ENCODE measurements at regions of chr17 and their contacts with region 1.

Region 1: GRCh38 chr17:1186923-1187771 is 7.4 kb upstream of the ABR start:
- DNase-seq: peak; percentile 92 to 95
- ATAC-seq: peak; percentile 90 to 98
- H3K4me3 ChIP-seq: no peak overlapping the region
- H3K27ac ChIP-seq: peak overlapping the region in 1 of 2 experiments; percentile 61; a peak in 3 of 6 replicates
- H3K4me1 ChIP-seq: peaks cover 4% of the 10 kb centered on the region; the same call in 1 of the 3 replicates
- CTCF ChIP-seq: peak; percentile 97
- EP300 ChIP-seq: no peak
- POLR2A ChIP-seq: no peak
- RAD21 ChIP-seq: peak; percentile 79 to 85

Region 2: GRCh38 chr17:1108861-1109605 is 78.1 kb before region 1 on chr17:
- CTCF ChIA-PET with region 1: interaction called, 33 read pairs
- POLR2A ChIA-PET with region 1: no interaction called
- DNase-seq: peak; percentile 48 to 66
- ATAC-seq: peak; percentile 39 to 40
- H3K4me3 ChIP-seq: peak overlapping the region; percentile 80
- H3K27ac ChIP-seq: peak overlapping the region; percentile 98 to 99
- H3K4me1 ChIP-seq: peaks cover 45% of the 10 kb centered on the region
- CTCF ChIP-seq: no peak
- EP300 ChIP-seq: no peak
- POLR2A ChIP-seq: peak; percentile 45
- RAD21 ChIP-seq: no peak

Region 3: DNA sequence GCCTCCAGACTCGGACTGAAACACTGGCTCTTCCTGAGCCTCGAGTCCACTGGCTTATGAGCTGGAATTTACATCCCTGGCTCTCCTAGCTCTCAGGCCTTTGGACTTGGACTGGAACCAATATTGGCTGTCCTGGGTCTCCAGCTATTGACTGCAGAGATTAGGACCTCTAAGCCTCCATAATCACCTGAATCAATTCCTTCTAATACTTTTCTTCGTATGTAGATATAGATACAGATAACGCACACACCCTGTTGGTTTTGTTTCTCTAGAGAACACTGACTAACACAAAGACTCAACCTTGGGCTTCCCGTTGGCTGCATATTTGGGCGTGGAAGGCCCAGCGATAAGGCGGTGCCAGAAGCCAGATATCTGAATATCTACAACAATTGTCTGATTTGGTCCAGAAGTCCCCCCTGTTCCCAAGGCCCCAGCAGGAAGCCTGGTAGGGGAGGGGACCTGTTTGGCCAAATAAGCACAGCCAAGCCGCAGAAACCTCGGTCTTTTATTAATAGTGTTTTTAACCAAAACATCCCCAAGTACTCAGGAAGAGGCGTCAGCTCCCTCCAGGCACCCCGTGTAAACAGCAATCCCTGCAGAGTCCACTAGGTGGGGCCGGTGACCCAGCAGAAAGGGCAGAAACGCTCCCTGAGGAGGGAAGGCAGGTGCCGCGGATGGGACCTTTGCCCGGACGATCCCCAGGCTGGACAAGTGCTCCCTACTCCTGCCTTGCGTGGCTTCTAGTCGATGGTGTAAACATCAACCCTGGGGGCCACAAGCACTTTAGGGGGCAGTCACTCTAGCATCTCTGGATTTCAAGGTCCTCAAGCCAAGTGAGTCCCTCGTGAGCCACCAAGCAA is 64.4 kb before region 1 on chr17:
- CTCF ChIA-PET with region 1: interaction called, 324 read pairs
- POLR2A ChIA-PET with region 1: interaction called, 3 read pairs
- DNase-seq: peak; percentile 71 to 91
- ATAC-seq: peak; percentile 72 to 94
- H3K4me3 ChIP-seq: no peak overlapping the region
- H3K27ac ChIP-seq: peak overlapping the region; percentile 31 to 44; a peak in 5 of 6 replicates
- H3K4me1 ChIP-seq: peaks cover 14% of the 10 kb centered on the region; the same call in 2 of the 3 replicates
- CTCF ChIP-seq: peak; percentile 92
- EP300 ChIP-seq: no peak
- POLR2A ChIP-seq: no peak
- RAD21 ChIP-seq: peak; percentile 92 to 93

Region 4: DNA sequence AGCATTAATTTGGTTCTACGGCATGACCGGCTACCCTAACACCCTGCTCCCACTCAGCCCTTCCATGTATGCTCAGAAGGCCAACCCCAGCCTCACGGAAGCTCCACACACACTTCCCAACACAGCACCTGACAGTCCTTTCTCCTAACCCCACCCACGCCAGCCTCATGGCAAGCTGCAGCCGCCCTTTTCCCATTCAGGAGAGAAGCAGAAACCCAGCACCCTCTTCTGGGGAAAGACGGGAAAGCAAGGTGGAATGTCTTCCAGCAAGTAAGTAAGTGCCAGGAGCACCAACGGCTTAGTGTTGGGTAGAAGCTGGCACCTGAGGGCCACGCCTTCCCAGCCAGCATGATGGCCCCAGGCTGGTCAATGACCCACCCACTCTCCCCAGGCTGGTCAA is 39.5 kb before region 1 on chr17:
- CTCF ChIA-PET with region 1: interaction called, 149 read pairs
- POLR2A ChIA-PET with region 1: no interaction called
- DNase-seq: peak; percentile 87 to 88
- ATAC-seq: peak; percentile 86 to 92
- H3K4me3 ChIP-seq: no peak overlapping the region
- H3K27ac ChIP-seq: peak overlapping the region in 1 of 2 experiments; percentile 39; a peak in 2 of 6 replicates
- H3K4me1 ChIP-seq: 0 out of 3 replicates have a peak, but pooled peaks cover 5% of the 10 kb centered on the region
- CTCF ChIP-seq: peak; percentile 74
- EP300 ChIP-seq: no peak
- POLR2A ChIP-seq: no peak
- RAD21 ChIP-seq: peak; percentile 86 to 93

Region 5: DNA sequence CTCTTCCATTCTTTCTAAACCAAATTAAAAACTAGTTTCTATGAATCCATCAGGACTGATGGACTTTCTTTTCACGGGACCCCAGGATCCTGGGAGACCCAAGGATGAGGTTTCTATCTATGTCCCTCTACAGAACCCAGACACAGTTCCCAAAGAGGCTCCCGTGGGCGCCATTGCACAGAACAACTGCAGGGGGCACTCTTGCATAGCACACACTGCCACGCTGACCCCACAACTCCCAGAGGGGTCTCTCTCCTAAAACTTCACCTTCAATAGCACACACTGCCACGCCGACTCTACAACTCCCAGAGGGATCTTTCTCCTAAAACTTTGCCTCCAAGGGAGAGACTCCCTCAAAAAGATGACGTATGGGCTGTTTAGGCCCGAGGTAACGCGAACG is 16.4 kb before region 1 on chr17:
- CTCF ChIA-PET with region 1: interaction called, 60 read pairs
- POLR2A ChIA-PET with region 1: no interaction called
- DNase-seq: no peak
- ATAC-seq: no peak
- H3K4me3 ChIP-seq: no peak overlapping the region
- H3K27ac ChIP-seq: no peak overlapping the region
- H3K4me1 ChIP-seq: no peaks in the 10 kb centered on the region
- CTCF ChIP-seq: peak; percentile 26; the same call in 2 of the 3 replicates
- EP300 ChIP-seq: no peak
- POLR2A ChIP-seq: no peak
- RAD21 ChIP-seq: peak in 1 of 2 experiments; percentile 46; a peak in 2 of 5 replicates

Region 6: DNA sequence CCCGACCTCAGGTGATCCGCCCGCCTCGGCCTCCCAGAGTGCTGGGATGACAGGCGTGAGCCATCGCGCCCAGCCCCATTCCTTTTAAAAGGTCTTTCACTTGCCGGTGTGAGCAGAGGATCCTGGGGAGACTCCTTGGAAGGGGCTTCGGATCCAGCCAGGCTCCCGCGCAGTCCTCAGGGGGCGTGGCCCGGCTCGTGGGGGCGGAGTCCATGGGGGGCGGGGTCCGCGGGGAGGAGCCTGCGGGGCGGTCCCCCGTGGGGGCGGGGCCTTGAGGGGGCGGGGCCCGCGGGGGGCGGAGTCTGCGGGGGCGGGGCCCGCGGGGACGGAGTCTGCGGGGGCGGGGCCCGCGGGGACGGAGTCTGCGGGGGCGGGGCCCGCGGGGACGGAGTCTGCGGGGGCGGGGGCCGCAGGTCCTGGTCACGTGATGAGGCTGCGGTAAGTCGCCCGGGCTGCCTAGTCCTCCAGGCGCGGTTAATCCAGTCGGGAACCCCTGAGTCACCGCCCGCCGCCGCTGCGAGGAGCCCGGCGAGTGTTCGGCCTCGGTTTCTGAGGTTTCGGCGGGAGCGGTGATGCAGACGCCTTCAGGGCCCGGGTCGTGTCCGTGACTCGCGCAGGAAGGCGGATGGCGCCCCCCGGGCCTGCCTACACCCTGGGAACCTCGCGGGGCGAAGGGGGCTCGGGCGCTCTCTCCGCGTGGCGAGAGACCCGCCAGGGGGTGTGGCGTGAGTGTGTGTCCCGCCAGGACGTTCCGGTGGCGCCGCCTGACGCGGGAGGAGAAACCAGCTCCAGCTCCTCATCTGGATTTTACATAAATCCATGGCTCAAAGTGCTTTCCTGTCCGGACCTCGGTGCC is 16.2 kb after region 1 on chr17:
- CTCF ChIA-PET with region 1: interaction called, 120 read pairs
- POLR2A ChIA-PET with region 1: no interaction called
- DNase-seq: peak; percentile 79 to 87
- ATAC-seq: peak; percentile 74 to 75
- H3K4me3 ChIP-seq: peak overlapping the region; percentile 54
- H3K27ac ChIP-seq: peak overlapping the region; percentile 58 to 88
- H3K4me1 ChIP-seq: no peaks in the 10 kb centered on the region
- CTCF ChIP-seq: peak; percentile 24; the same call in 2 of the 3 replicates
- EP300 ChIP-seq: no peak
- POLR2A ChIP-seq: peak; percentile 27; the same call in 1 of the 2 replicates
- RAD21 ChIP-seq: peak in 1 of 2 experiments; percentile 23; a peak in 1 of 5 replicates

Region 7: DNA sequence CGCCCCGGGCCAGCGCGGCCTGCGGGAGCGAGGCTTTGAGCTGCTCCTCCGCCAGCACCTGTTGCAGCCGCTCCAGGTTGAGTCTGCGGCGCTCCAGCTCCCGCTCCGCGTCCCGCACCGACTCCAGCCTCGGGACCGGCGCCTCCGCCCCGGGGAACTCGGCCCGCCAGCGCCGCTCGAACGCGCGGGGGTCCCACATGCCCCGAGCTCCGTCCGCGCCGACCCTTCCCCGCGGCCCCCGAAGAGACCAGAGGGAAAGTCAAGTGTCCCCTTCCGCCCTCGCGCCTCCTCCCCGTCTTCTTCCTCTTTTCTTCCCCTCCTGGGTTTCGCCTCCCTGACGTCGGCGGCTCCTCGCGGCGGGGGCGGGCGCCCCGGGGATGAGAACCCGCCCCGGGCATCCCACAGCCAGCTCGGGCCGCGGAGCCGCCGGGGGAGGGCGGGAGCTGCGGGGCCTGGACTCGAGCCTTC is 42.3 kb after region 1 on chr17:
- CTCF ChIA-PET with region 1: interaction called, 15 read pairs
- POLR2A ChIA-PET with region 1: no interaction called
- DNase-seq: peak in 1 of 2 experiments; percentile 78
- ATAC-seq: peak; percentile 58 to 66
- H3K4me3 ChIP-seq: peak overlapping the region; percentile 77
- H3K27ac ChIP-seq: peak overlapping the region; percentile 65 to 84
- H3K4me1 ChIP-seq: peaks cover 22% of the 10 kb centered on the region
- CTCF ChIP-seq: no peak
- EP300 ChIP-seq: no peak
- POLR2A ChIP-seq: peak; percentile 34
- RAD21 ChIP-seq: no peak

Measured in A549 (cell line).